Activated CD4-positive, alpha-beta T cell treated with anti-CD3 and anti-CD28 coated beads, Interleukin-2, amount 10 ng/mL, durations not matched to agents 24 days and 14 days (primary cell): ENCODE measurements at regions of chr3 and their contacts with region 1.

Region 1: DNA sequence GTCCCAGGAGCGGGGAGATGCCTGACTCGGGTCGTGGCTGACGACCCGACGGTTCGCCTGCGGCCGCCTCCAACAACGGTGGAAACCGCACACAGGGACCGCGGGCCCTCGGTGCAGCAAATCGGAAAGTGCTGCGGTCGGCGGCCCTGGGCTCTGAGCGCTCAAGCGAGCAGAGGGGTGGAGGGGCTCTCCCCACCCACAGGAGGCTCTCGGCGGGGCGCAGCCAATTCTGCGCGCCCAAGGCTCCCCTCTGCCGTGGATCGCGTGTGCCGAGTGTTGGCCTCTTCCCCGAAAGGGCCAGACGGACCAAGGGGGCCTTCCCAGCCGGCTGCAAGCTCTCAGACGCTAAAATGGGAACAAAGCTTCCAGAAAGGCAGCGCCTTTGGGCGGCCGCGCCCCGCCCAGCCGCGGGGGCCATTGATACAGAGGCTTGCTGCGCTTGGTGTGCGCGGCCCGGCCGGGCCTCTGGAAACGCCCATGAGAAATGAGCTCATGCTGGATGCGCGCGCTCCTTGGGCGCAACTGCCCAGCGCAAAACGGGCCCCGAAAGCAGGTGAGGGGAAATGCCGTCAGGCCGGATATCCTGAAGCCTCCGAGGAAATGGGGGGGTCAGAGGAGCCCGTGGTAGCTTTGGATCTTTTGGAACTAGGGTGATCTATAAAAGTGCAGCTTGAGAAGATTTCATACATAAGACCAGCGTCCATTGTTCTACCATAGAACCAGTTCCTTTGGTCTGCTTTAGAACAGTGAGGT is 1.2 kb upstream of the GSK3B start:
- DNase-seq: peak; percentile 97
- H3K4me3 Mint-ChIP-seq: no peak overlapping the region
- H3K27ac Mint-ChIP-seq: no peak overlapping the region
- H3K4me1 Mint-ChIP-seq: peaks cover 15% of the 10 kb centered on the region
- H3K27me3 Mint-ChIP-seq: no peaks in the 10 kb centered on the region

Region 2: DNA sequence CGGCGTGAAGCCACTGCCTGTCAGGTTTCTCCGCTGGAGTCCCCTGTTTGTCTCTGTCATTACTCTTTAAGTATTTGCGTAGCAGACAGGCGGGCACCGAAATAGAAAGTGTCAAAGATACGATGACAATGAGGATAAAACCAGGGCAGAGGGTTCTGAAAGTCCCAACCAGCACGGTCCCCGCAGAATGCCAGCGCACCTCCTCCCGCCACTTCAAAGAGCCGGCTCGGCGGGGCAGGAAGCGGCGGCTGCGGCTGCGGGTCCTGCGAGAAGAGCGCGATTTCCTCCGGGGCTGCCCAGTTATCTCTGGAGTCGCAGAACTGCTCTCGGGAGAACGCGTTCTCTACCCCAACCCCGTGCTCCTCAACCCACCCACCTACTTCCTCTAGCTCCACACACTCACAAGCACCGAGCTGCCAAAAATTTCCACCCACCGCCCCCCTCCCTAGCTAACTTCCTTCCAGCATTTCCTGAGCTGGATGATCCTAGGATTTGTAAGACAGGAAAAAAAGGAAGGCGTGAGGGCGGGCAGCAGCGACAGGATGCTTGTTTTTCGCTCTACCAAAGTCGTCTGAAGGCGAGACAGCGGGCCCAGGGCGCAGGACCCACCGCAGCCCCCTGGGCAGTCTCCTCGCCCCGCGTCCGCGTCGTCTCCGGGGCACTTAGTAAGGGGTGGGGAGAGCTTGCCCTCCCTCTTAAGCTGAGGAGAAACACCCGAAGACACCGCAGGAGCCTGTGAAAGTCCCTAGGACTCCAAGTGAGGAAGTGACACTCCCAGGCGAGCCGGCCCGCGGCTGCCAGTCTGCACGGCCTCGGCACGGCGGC is 801.3 kb before region 1 on chr3 and contains the start of gene ARHGAP31:
- intact Hi-C with region 1: loop called (anchors 10 kb)
- DNase-seq: peak; percentile 95
- H3K4me3 Mint-ChIP-seq: peak within 1 kb of the TSS; percentile 86
- H3K27ac Mint-ChIP-seq: peak within 1 kb of the TSS; percentile 89
- H3K4me1 Mint-ChIP-seq: peaks cover 37% of the 10 kb centered on the region
- H3K27me3 Mint-ChIP-seq: peaks cover 14% of the 10 kb centered on the region
- total RNA-seq, gene ARHGAP31: 9.5 and 11.0 TPM in 2 replicates

Region 3: GRCh38 chr3:119469381-119470189 is 625.8 kb before region 1 on chr3:
- intact Hi-C with region 1: loop called (anchors 1 kb)
- DNase-seq: peak; percentile 60
- H3K4me3 Mint-ChIP-seq: peak overlapping the region; percentile 97
- H3K27ac Mint-ChIP-seq: peak overlapping the region; percentile 95
- H3K4me1 Mint-ChIP-seq: peaks cover 30% of the 10 kb centered on the region
- H3K27me3 Mint-ChIP-seq: no peaks in the 10 kb centered on the region

Region 4: DNA sequence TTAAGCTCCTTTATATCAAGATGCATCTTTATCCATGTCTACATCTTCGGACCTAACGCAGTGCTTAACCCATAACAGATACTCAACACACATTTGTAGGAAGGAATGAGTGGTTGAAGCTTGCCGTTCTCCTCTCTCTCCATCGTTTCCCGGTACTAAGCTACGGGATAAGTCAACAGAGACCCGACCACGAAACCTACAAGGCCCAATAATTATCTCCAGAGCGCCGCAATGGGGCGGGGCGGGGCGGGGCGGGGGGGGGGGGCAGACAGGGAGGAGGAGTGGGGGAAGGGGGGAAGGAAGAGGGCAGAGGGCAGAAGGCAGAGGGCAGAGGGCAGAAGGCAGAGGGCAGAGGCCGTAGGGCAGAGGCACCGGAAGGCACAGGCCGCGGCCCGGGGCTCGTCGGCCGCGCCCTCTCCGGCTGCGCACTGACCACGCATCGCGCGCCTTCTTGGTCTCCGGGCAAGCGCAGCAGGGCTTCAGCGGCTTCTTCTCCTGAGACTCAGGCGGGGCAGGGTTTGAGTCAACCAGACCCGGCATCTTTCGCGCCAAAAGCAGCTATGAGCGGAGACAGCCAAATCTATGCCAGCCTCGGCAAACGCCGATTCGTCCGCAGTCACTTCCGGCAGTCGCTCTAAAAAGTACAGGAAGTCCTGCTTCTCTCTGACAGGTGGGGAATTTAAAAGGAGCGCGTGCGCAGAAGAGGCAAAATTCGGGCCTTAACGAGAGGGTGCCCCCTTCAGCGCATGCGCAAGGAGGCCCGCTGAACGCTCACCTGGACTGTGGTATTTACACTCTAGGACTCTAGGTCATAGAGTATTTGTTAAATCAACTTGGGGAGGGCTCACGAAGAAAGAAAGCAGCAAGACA is 418.4 kb before region 1 on chr3 and contains the start of gene COX17:
- intact Hi-C with region 1: loop called (anchors 1 kb)
- DNase-seq: peak; percentile 98
- H3K4me3 Mint-ChIP-seq: peak within 1 kb of the TSS; percentile 87
- H3K27ac Mint-ChIP-seq: peak within 1 kb of the TSS; percentile 96
- H3K4me1 Mint-ChIP-seq: peaks cover 33% of the 10 kb centered on the region
- H3K27me3 Mint-ChIP-seq: no peaks in the 10 kb centered on the region
- total RNA-seq, gene COX17: 61.0 and 70.0 TPM in 2 replicates

Region 5: GRCh38 chr3:119891944-119892721 is 203.3 kb before region 1 on chr3:
- intact Hi-C with region 1: loop called (anchors 2 kb)
- DNase-seq: peak; percentile 85
- H3K4me3 Mint-ChIP-seq: no peak overlapping the region
- H3K27ac Mint-ChIP-seq: no peak overlapping the region
- H3K4me1 Mint-ChIP-seq: peaks cover 6% of the 10 kb centered on the region
- H3K27me3 Mint-ChIP-seq: no peaks in the 10 kb centered on the region

Region 6: DNA sequence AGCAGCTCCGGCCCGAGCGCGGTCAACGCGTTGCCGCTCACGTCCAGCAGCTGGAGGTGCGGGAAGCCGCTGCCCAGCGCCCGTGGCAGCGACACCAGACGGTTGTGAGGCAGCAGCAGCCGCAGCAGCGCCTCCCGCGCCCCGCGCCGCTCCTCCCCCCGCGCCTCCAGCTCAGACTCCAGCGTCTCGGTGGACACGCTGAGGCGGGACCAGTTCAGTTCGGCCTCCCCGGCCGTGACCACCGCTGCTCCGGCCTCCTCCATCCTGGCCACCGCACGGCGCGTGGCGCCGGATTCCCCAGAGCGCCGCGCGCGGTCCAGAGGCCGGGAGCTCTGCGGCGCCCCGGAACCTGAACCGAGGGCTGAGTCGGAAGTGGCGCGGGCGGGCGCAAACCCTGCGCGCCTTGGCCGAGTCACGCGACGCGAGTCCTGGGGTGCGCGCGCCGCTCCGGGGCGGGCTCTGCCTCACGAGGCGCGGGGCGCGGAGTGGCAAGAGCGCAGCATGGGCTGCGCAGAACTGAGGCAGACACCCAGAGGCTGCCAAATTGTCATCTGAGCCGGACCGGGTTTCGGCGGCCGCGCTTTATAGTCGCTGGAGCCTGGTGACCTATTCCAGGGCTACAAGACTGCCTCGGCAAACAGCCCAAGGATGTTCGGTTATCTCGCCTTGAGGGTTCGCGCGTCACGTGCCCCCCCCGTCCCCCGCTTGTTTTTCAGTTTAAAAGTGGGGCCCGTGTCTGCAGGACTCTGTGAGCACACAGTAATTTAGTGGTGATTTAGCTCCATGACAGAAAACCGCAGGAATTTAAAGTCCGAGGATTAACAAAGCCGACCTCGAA is 253.8 kb after region 1 on chr3 and contains the start of gene LRRC58:
- intact Hi-C with region 1: loop called (anchors 1 kb)
- DNase-seq: peak; percentile 97
- H3K4me3 Mint-ChIP-seq: peak within 1 kb of the TSS; percentile 91
- H3K27ac Mint-ChIP-seq: peak within 1 kb of the TSS; percentile 89
- H3K4me1 Mint-ChIP-seq: peaks cover 44% of the 10 kb centered on the region
- H3K27me3 Mint-ChIP-seq: peaks cover 25% of the 10 kb centered on the region
- total RNA-seq, gene LRRC58: 28.1 and 29.4 TPM in 2 replicates

Region 7: DNA sequence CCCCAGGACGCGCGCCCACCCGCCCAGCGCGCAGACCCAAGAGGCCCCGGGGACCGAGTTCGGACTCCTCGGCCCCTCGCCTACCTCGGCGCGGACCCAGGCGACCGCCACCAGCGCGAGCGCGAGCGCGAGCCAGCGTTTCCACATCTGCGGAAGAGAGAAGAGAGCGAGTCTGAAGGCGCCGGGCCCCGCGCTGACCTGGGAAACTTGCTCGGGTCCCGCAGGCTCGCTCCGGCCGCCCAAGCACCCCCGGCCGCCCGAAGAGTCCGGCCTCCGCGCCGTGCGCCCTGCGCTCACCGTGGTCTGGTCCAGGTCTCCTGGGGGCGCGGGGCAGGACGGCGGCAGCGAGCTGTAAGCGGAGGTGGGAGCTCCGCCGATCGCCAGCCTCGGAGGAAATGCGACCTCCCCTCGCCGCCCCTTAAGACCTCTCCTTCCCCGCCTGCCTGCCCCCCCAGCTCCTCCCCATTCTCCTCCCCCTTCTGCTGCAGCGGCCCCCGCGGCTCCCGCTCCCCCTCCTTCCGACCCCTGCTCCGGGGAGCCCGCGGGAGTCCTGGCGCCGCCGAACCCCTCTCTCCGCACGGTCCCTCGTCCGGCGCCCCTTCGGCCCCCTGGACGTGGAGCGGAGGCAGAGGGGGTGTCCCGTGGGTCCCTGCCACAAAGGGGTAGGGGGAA is 355.3 kb after region 1 on chr3 and contains the start of gene FSTL1:
- intact Hi-C with region 1: no loop called
- DNase-seq: no peak
- H3K4me3 Mint-ChIP-seq: peak within 1 kb of the TSS; percentile 84
- H3K27ac Mint-ChIP-seq: no peak within 1 kb of the TSS
- H3K4me1 Mint-ChIP-seq: peaks cover 7% of the 10 kb centered on the region
- H3K27me3 Mint-ChIP-seq: peaks cover 60% of the 10 kb centered on the region
- total RNA-seq, gene FSTL1: 0.12 and 0.26 TPM in 2 replicates

Region 8: DNA sequence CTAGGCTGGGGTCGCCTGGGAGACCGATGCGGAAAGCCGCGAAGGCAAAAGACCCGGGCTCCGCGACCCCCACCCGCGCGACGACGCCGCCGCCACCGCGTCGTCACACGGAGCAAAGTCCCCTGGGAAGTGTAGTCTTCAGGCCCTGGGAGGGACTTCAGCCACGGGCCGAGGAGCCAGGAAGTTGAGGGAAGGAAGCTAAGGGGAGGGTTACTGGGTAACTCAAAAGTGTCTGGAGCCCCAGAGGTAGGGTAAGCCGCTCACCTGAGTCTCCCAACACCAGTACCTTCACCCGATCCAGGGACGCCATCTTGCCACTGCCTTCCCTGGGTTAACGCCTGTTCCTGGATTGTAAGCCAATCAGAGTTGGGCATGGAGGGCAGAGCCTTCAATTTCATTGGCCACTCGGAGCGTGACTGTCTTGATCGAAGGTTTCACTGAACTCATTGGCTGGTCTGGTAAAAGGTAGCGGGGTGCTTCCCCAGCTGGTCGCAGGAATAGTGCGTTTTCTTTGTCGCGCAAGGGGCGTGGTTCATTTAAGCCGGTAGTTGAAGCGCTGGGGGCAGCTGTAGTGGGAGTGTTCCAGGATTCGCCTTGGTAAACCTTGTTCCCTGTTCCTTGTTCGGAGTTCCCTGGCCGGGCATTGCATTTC is 646.9 kb after region 1 on chr3 and contains the starts of genes GTF2E1 and RABL3:
- intact Hi-C with region 1: loop called (anchors 2 kb)
- DNase-seq: peak; percentile 99
- H3K4me3 Mint-ChIP-seq: peak within 1 kb of the TSS; percentile 97
- H3K27ac Mint-ChIP-seq: peak within 1 kb of the TSS; percentile 98
- H3K4me1 Mint-ChIP-seq: peaks cover 25% of the 10 kb centered on the region
- H3K27me3 Mint-ChIP-seq: peaks cover 2% of the 10 kb centered on the region
- total RNA-seq, gene GTF2E1: 25.9 and 27.8 TPM in 2 replicates
- total RNA-seq, gene RABL3: 27.6 and 29.3 TPM in 2 replicates